ENCODE measurements at regions of chr5 and their contacts with region 1.

Region 1: GRCh38 chr5:56909294-56910209 is at the start of gene SETD9:
- DNase-seq: peak; percentile 87 to 97
- ATAC-seq: peak; percentile 89 to 93
- H3K4me3 ChIP-seq: peak within 1 kb of the TSS; percentile 71
- H3K27ac ChIP-seq: peak within 1 kb of the TSS; percentile 86 to 94
- H3K4me1 ChIP-seq: peaks cover 4% of the 10 kb centered on the region; the same call in 1 of the 3 replicates
- CTCF ChIP-seq: no peak
- EP300 ChIP-seq: no peak
- POLR2A ChIP-seq: peak; percentile 86
- RAD21 ChIP-seq: no peak
- polyA plus RNA-seq, gene SETD9: 9.4 and 13.1 TPM in 2 replicates

Region 2: DNA sequence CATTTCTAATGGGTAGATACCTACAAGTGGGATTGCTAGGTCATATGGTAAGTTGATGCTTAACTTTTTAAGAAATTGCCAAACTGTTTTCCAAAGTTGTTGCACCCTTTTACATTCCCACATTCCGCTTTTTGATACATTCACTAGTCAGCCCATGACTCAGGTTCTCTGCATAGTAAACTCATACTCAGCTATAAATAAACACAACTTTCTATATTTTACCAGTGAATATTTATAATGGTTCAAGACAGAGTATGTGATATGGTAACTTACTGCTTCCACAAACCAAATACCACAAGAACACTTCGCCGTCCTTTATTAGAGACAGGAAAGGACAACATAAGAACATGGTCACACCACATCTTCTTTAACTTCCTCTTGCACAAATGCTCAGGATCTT is 1428.8 kb before region 1 on chr5:
- CTCF ChIA-PET with region 1: no interaction called
- POLR2A ChIA-PET with region 1: interaction called, 10 read pairs
- DNase-seq: no peak
- ATAC-seq: no peak
- H3K4me3 ChIP-seq: no peak overlapping the region
- H3K27ac ChIP-seq: no peak overlapping the region
- H3K4me1 ChIP-seq: no peaks in the 10 kb centered on the region
- CTCF ChIP-seq: no peak
- EP300 ChIP-seq: no peak
- POLR2A ChIP-seq: no peak
- RAD21 ChIP-seq: no peak

Region 3: DNA sequence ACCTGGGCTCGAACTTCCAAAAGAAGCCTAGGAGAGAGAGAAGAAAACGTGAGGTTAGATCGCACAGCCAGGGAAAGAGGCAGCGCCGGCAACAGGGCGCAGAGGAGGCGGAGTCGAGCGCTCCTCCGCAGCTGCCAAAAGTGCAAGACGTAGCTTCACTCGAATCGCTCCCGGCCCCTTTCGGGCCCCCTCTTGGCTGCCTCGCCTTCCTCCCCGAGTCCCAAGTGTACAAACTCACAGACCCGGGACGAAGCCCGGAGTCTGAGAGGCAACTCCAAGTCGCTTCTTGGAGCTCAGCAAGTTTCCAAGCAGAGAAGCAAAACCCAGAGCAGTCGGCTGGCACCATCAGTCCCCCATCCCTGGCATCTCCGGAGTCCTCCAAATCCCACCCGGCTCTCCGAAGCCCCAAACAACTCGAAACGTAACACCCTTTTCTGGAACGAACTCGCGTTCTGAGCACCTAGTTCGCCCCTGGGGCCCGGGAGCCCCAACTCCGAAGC is 41.1 kb after region 1 on chr5:
- CTCF ChIA-PET with region 1: no interaction called
- POLR2A ChIA-PET with region 1: interaction called, 14 read pairs
- DNase-seq: peak; percentile 49 to 58
- ATAC-seq: peak; percentile 62 to 88
- H3K4me3 ChIP-seq: peak overlapping the region; percentile 77
- H3K27ac ChIP-seq: peak overlapping the region; percentile 86 to 98
- H3K4me1 ChIP-seq: peaks cover 14% of the 10 kb centered on the region; the same call in 2 of the 3 replicates
- CTCF ChIP-seq: no peak
- EP300 ChIP-seq: no peak
- POLR2A ChIP-seq: no peak
- RAD21 ChIP-seq: no peak

Region 4: GRCh38 chr5:57173185-57174127 is 263.9 kb after region 1 on chr5 and contains the start of gene GPBP1:
- CTCF ChIA-PET with region 1: no interaction called
- POLR2A ChIA-PET with region 1: interaction called, 20 read pairs
- DNase-seq: peak; percentile 93 to 99
- ATAC-seq: peak; percentile 90 to 92
- H3K4me3 ChIP-seq: peak within 1 kb of the TSS; percentile 57
- H3K27ac ChIP-seq: peak within 1 kb of the TSS; percentile 87 to 97
- H3K4me1 ChIP-seq: peaks cover 26% of the 10 kb centered on the region; the same call in 2 of the 3 replicates
- CTCF ChIP-seq: no peak
- EP300 ChIP-seq: no peak
- POLR2A ChIP-seq: peak; percentile 35
- RAD21 ChIP-seq: peak in 1 of 2 experiments; percentile 12; a peak in 1 of 5 replicates
- polyA plus RNA-seq, gene GPBP1: 58.3 and 86.0 TPM in 2 replicates

Measured in A549 (cell line).